Left cardiac atrium (tissue), 4 donors: ENCODE measurements at regions of chr1 and their contacts with region 1.

Region 1: GRCh38 chr1:151739590-151740375 is 18.5 kb downstream of the RIIAD1 start:
- DNase-seq: no peak
- ATAC-seq: peak; percentile 19 to 23

Region 2: GRCh38 chr1:151443846-151444782 is 295.7 kb before region 1 on chr1:
- intact Hi-C with region 1: loop called in 1 of 2 experiments (anchors 5 kb)
- DNase-seq: peak; percentile 39
- ATAC-seq: peak; percentile 86 to 92

Region 3: GRCh38 chr1:151459331-151460046 is 280.3 kb before region 1 on chr1 and contains the start of gene POGZ:
- intact Hi-C with region 1: no loop called
- DNase-seq: peak; percentile 98
- ATAC-seq: peak; percentile 96
- total RNA-seq, gene POGZ: 46.6 to 47.1 TPM

Region 4: GRCh38 chr1:151534665-151535278 is 205.0 kb before region 1 on chr1:
- intact Hi-C with region 1: loop called (anchors 2 to 5 kb)
- DNase-seq: peak; percentile 82
- ATAC-seq: peak; percentile 52 to 60

Region 5: GRCh38 chr1:151594143-151594625 is 145.6 kb before region 1 on chr1:
- intact Hi-C with region 1: loop called (anchors 2 to 5 kb)
- DNase-seq: peak; percentile 78
- ATAC-seq: peak; percentile 57 to 78

Region 6: GRCh38 chr1:151693076-151693651 is 46.6 kb before region 1 on chr1:
- intact Hi-C with region 1: loop called (anchors 2 to 5 kb)
- DNase-seq: no peak
- ATAC-seq: peak in 1 of 2 donors; percentile 30

Region 7: DNA sequence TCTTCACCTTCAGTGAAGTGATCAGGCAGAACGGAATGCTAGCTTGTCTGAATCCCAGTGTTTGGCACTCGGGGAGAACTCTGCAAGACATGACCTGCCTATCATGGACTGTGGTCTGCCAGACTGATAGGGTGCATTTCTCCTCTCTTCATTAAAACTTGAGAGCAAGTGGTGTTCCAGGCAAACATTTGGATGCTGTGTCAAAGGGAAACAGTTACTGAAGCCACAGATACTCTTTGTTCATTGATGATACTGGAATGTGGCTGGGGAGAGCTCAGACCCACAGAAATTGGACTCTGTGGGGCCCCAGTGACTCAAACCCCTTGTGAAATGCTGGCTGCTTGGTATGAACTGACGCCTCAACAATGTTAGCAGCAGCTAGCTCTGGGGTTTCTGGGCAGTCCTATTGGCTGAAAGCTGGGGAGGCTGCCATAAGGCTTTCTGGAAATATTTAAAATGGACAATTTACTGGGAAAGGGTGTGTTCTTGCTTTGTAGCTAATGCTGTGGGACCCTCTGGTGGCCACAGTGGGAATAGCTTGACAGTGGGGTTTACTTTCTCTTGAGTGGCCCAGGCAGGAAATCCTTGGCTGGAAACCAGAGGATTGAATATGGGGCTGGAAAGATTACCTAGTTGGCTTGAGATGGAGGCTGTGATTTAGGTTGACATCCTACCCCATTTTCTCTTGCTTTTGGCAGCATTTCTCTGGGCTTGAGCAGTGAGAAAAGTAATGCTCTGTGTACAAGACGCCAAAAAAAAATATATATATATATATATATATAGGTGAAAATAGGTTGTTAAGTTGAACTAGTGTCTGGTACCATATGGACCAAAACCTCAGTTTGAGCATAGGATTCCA is 261.8 kb after region 1 on chr1:
- intact Hi-C with region 1: loop called in 1 of 2 experiments (anchors 10 kb)
- DNase-seq: peak; percentile 90
- ATAC-seq: peak; percentile 72 to 73